Upper lobe of right lung (tissue), 1 donor: ENCODE measurements at regions of chr19 and their contacts with region 1.

Region 1: GRCh38 chr19:732148-733069 is 18.5 kb upstream of the MISP start:
- DNase-seq: no peak
- ATAC-seq: no peak
- H3K4me3 ChIP-seq: no peak overlapping the region
- H3K27ac ChIP-seq: no peak overlapping the region
- H3K4me1 ChIP-seq: no peaks in the 10 kb centered on the region
- H3K27me3 ChIP-seq: no peaks in the 10 kb centered on the region
- CTCF ChIP-seq: no peak

Region 2: GRCh38 chr19:584240-585001 is 148.0 kb before region 1 on chr19:
- intact Hi-C with region 1: loop called (anchors 5 kb)
- DNase-seq: peak; percentile 77
- ATAC-seq: peak; percentile 67
- H3K4me3 ChIP-seq: no peak overlapping the region
- H3K27ac ChIP-seq: no peak overlapping the region
- H3K4me1 ChIP-seq: peaks cover 10% of the 10 kb centered on the region
- H3K27me3 ChIP-seq: peaks cover 19% of the 10 kb centered on the region
- CTCF ChIP-seq: peak; percentile 84

Region 3: DNA sequence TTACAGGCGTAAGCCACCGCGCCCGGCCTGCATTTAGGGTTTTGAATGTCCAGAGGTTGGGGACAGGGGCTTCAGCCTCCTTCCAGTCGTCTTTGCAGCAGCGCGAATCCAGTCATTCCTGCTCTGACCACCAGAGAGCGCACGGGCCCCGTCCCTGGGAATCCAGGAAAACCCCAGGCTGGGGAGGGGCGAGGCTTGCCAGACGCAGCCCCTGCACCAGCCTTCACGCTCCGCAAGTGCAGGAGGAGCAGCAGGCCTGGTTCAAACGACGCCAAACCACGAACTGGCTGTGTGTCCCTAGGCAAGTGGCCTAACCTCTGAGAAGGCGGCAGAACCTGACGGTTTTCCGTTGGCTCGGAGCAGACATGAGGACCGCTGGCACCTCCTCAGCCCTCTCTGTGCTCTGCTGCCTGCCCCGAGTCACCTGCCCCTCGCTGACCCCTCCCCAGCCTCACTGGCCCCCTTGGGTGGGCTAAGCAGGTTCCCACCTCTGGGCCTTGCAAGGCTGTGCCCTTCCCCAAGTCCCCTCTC is 67.4 kb before region 1 on chr19:
- intact Hi-C with region 1: loop called (anchors 2 kb)
- DNase-seq: peak; percentile 90
- ATAC-seq: peak; percentile 61
- H3K4me3 ChIP-seq: no peak overlapping the region
- H3K27ac ChIP-seq: no peak overlapping the region
- H3K4me1 ChIP-seq: peaks cover 39% of the 10 kb centered on the region
- H3K27me3 ChIP-seq: no peaks in the 10 kb centered on the region
- CTCF ChIP-seq: peak; percentile 92

Region 4: DNA sequence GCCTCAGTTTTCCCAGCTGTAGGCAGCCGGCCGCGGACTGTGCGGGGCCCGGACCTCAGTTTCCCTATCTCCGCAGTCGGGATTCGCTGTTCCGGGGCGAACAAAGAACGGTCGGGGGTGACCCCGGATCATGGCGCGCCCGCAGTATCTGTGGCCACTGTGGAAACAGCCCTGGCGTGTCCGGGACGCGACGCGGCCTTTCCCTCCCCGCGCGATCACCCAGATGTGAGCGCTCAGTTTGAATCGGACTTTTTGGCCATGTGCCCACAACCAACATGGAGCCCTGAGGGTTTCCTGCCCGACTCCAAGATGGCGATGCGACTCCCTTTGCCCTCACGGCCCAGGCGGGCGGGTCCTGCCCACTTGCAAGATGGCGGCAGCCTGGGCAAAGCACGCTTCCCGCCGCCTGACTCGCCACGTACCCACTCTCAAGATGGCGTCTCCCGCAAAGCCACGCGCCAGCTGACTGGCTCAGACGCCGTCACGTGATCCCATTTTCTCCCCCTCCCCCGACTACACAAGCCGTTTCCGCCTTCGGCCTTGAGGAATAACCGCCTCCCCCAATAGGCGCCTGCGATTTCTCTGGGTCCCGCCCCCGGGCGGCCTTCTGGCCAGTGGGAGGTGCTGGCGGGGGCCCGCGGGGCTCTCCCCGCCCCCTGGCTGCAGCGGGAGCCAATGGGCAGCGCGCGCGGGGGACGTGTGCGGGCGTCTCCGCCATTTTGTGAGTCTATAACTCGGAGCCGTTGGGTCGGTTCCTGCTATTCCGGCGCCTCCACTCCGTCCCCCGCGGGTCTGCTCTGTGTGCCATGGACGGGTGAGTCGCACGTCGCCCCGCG is 64.5 kb after region 1 on chr19 and contains the start of gene PTBP1:
- intact Hi-C with region 1: no loop called
- DNase-seq: peak; percentile 100
- ATAC-seq: peak; percentile 91
- H3K4me3 ChIP-seq: peak within 1 kb of the TSS; percentile 86
- H3K27ac ChIP-seq: peak within 1 kb of the TSS; percentile 93
- H3K4me1 ChIP-seq: peaks cover 40% of the 10 kb centered on the region
- H3K27me3 ChIP-seq: no peaks in the 10 kb centered on the region
- CTCF ChIP-seq: peak; percentile 13
- total RNA-seq, gene PTBP1: 245 TPM